Activated T-helper 2 cell treated with anti-CD3 and anti-CD28 coated beads, Interferon-gamma antibody, Interleukin-2, Interleukin-4, amounts not matched to agents 10 μg/mL and 5 μg/mL and 100 μg/mL, durations not matched to agents 14 hours and 24 hours and 36 hours (primary cell): ENCODE measurements at regions of chr13 and their contacts with region 1.

Region 1: GRCh38 chr13:27374650-27375049 is 49.8 kb upstream of the GTF3A start:
- DNase-seq: peak; percentile 39
- H3K4me3 Mint-ChIP-seq: no peak overlapping the region
- H3K27ac Mint-ChIP-seq: no peak overlapping the region
- H3K4me1 Mint-ChIP-seq: peaks cover 17% of the 10 kb centered on the region
- H3K27me3 Mint-ChIP-seq: peaks cover 17% of the 10 kb centered on the region

Region 2: DNA sequence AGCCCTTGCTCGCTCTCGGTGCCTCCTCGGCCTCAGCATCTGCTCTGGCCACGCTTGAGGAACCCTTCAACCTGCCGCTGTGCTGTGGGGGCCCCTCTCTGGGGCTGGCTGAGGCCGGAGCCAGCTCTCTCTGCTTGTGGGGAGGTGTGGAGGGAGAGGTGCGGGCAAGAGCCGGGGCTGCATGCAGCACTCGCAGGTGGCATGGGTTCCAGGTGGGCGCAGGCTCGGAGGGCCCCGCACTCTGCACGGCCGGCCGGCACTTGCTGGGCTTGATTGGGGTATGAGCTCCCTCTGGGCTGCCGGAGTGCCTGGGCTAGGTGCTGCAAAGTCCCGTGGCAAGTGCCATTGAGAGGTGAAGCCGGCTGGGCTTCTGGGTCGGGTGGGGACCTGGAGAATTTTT is 155.0 kb before region 1 on chr13:
- intact Hi-C with region 1: no loop called
- DNase-seq: no peak
- H3K4me3 Mint-ChIP-seq: no peak overlapping the region
- H3K27ac Mint-ChIP-seq: no peak overlapping the region
- H3K4me1 Mint-ChIP-seq: no peaks in the 10 kb centered on the region
- H3K27me3 Mint-ChIP-seq: peaks cover 6% of the 10 kb centered on the region

Region 3: DNA sequence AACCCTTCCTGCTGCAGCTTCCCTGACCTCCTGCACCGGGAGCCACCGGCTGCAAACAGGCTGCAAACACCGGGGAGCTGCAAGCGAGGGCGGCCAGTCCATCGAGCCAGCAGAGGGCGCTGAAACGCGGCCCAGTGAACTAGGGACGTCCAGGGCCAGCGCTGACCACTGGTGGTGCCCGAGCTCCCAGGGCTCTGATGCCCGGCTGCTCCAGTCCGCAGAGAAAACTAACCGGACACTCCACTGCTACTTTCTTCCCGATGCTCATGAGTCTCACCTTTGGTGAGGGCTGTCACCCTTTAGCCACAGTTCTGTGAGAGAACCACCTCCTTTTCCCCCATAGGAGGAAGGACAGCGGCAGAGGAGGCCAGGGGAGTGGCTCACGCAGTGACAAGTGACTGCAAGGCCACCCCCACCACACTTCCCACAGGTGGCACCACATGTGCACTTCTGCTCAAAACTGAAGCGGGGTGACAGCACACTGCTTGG is 158.5 kb after region 1 on chr13:
- intact Hi-C with region 1: loop called (anchors 10 kb)
- DNase-seq: peak; percentile 14
- H3K4me3 Mint-ChIP-seq: no peak overlapping the region
- H3K27ac Mint-ChIP-seq: no peak overlapping the region
- H3K4me1 Mint-ChIP-seq: no peaks in the 10 kb centered on the region
- H3K27me3 Mint-ChIP-seq: peaks cover 12% of the 10 kb centered on the region

Region 4: DNA sequence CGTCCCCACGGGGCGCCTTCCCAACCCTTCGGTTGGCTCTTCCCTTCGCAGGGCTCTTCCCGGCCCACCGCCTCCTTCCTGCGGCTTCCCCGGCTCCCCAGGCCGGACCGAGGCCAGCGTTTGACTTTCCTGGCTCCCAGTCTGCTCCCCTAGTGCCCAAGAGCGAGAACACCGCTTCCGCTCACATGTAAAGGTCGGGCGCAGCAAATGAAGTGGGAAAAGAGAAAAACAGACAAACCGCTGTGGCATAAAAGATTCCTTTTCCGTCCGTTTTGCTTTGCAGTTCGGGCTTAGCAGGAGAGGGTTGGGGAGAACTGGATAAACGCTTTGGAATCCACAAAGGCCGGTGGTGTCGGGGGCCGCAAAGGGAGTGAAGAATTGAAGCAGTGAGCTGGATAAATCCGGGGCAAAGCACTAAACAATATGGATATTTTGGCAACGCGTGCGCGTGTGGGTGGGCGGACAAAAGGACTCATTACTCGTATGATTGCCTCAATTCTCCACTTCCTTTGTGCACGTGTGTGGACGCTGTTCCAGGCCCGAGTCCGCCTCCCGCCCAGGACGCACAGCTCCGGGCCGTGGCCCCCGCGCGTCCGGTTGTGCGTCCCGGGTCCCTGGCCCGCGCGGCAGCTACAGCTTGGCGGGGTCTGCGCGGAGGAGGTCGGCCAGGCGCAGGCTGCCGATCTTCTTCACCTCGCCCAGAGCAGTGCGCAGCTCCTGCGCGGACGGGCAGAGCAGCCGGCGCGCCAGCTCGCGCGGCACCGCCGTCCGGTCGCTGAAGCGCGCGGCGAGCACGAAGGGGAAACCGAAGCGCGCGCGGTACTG is 603.0 kb after region 1 on chr13:
- intact Hi-C with region 1: loop called (anchors 5 kb)
- DNase-seq: no peak
- H3K4me3 Mint-ChIP-seq: no peak overlapping the region
- H3K27ac Mint-ChIP-seq: peak overlapping the region; percentile 74
- H3K4me1 Mint-ChIP-seq: peaks cover 5% of the 10 kb centered on the region
- H3K27me3 Mint-ChIP-seq: peaks cover 81% of the 10 kb centered on the region